ENCODE measurements at regions of chr12 and their contacts with region 1.

Region 1: GRCh38 chr12:28068467-28068866 is 95.9 kb upstream of the PTHLH start:
- DNase-seq: no peak
- H3K4me3 ChIP-seq: no peak overlapping the region
- H3K27ac ChIP-seq: no peak overlapping the region
- H3K4me1 ChIP-seq: no peaks in the 10 kb centered on the region
- H3K27me3 ChIP-seq: no peaks in the 10 kb centered on the region
- CTCF ChIP-seq: no peak

Region 2: GRCh38 chr12:27840244-27840999 is 228.0 kb before region 1 on chr12:
- CTCF ChIA-PET with region 1: no interaction called
- POLR2A ChIA-PET with region 1: no interaction called
- intact Hi-C with region 1: no loop called
- DNase-seq: no peak
- H3K4me3 ChIP-seq: no peak overlapping the region
- H3K27ac ChIP-seq: no peak overlapping the region
- H3K4me1 ChIP-seq: no peaks in the 10 kb centered on the region
- H3K27me3 ChIP-seq: no peaks in the 10 kb centered on the region
- CTCF ChIP-seq: peak; percentile 61

Region 3: GRCh38 chr12:28121433-28121832 is 53.0 kb after region 1 on chr12:
- CTCF ChIA-PET with region 1: no interaction called
- POLR2A ChIA-PET with region 1: interaction called, 12 read pairs
- intact Hi-C with region 1: no loop called
- DNase-seq: no peak
- H3K4me3 ChIP-seq: no peak overlapping the region
- H3K27ac ChIP-seq: no peak overlapping the region
- H3K4me1 ChIP-seq: no peaks in the 10 kb centered on the region
- H3K27me3 ChIP-seq: no peaks in the 10 kb centered on the region
- CTCF ChIP-seq: no peak

Measured in PC-9 (cell line).